ENCODE measurements at regions of chr16 and their contacts with region 1.

Region 1: DNA sequence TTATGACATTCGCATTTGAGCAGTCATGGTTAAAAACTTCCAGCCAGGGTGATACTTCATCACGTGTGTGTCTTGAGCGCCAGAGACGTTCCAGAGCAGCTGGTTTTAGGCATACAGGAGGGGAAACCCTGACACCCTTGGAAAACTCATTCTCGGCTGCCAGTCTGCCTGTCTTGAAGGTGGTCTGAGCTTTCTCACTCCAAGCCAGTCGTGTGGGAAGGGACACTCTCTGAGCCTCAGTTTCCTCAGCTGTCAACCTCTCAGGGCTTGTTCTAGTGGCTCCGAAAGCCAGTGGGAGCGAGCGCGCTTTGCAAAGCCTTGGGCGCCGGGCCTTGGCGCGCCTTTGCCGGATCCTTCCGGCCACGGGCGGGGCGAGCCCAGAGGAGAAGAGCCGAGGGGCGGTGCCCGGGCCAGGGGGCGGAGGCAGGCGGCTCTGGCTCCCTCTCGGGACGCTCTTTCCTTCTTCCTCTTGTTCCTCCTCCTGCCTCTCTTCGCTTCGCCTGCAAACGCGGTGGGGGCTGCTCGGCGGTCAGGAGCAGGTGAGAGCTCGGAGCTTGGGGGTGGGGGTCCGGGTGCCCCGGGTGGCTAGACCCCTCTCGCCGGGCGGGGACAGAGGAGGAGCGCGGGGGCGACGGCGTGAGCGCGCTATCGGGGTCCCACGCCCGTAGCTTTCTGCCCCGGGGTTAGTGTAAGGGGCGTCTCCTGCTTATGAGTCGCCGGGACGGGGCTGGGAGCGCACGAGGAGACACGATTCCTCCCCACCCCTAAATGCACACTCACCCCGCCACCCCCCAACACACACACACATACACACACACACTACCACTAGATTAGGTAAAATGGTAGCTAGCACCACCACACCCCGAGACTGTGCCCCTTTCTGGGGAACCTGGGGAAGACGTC is at the start of gene LDAF1:
- DNase-seq: peak; percentile 82 to 88
- ATAC-seq: peak; percentile 89 to 95 (median 92)
- H3K4me3 ChIP-seq: peak within 1 kb of the TSS; percentile 62 to 89 (median 85)
- H3K27ac ChIP-seq: peak within 1 kb of the TSS; percentile 65 to 95 (median 86)
- H3K4me1 ChIP-seq: peaks cover 10 to 59% (median 49%) of the 10 kb centered on the region in 9 donors
- H3K27me3 ChIP-seq: no peaks in the 10 kb centered on the region
- CTCF ChIP-seq: peak in 4 of 9 donors; percentile 7 to 26 (median 16)
- total RNA-seq, gene LDAF1: 116 to 182 (median 143) TPM

Region 2: DNA sequence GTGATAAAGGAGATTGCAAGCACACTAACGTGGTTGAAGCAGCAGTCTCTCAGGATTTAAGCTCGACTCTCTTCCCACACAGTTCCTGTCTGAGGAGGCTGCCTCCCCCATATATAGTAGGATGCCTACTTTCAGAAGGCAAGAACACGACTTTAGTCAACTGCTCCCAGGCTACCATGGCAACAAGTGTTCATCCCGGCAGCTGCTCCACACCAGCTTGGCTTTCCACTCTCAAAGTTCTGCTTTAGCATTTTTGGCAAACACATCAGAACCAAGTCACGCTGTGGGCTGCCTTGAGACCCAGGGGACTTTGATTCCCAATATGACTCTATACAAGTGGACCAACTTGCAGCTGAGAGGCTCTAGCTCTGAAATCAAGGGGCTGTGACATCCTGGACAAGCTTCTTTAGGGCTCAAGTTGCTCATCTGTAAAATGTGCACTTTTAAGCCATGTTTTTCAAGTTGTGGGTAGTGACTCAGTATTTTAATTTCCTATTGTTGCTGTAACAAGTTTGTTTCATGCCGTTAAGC is 36.4 kb after region 1 on chr16:
- intact Hi-C with region 1: no loop called
- DNase-seq: no peak
- ATAC-seq: no peak
- H3K4me3 ChIP-seq: no peak overlapping the region
- H3K27ac ChIP-seq: no peak overlapping the region
- H3K4me1 ChIP-seq: no peaks in the 10 kb centered on the region
- H3K27me3 ChIP-seq: peaks cover 0 to 23% (median 7%) of the 10 kb centered on the region in 7 donors
- CTCF ChIP-seq: no peak

Region 3: GRCh38 chr16:21277927-21278706 is 119.7 kb after region 1 on chr16 and contains the start of gene CRYM:
- intact Hi-C with region 1: loop called in 2 of 10 experiments (anchors 1 to 5 kb)
- DNase-seq: peak; percentile 55 to 75
- ATAC-seq: peak; percentile 91 to 97 (median 96)
- H3K4me3 ChIP-seq: peak within 1 kb of the TSS; percentile 4 to 82 (median 61)
- H3K27ac ChIP-seq: peak within 1 kb of the TSS; percentile 31 to 94 (median 82)
- H3K4me1 ChIP-seq: peaks cover 0 to 30% (median 12%) of the 10 kb centered on the region in 9 donors
- H3K27me3 ChIP-seq: peaks cover 0 to 85% (median 22%) of the 10 kb centered on the region in 7 donors
- CTCF ChIP-seq: peak; percentile 60 to 89 (median 84)
- total RNA-seq, gene CRYM: 31.9 to 265 (median 186) TPM

Region 4: GRCh38 chr16:21554795-21555585 is 396.5 kb after region 1 on chr16:
- intact Hi-C with region 1: loop called in 4 of 10 experiments (anchors 5 to 10 kb)
- DNase-seq: peak; percentile 87 to 91
- ATAC-seq: peak; percentile 49 to 82 (median 71)
- H3K4me3 ChIP-seq: peak overlapping the region in 4 of 10 donors; percentile 2 to 34 (median 13)
- H3K27ac ChIP-seq: peak overlapping the region in 1 of 10 donors; percentile 48
- H3K4me1 ChIP-seq: peaks cover 4 to 31% (median 16%) of the 10 kb centered on the region in 9 donors
- H3K27me3 ChIP-seq: peaks cover 0 to 17% (median 9%) of the 10 kb centered on the region in 7 donors
- CTCF ChIP-seq: peak in 8 of 9 donors; percentile 98 to 100 (median 100)

Region 5: GRCh38 chr16:21952793-21953540 is 794.5 kb after region 1 on chr16 and contains the start of gene UQCRC2:
- intact Hi-C with region 1: loop called in 1 of 10 experiments (anchors 5 kb)
- DNase-seq: peak; percentile 85 to 93
- ATAC-seq: peak; percentile 95 to 98 (median 97)
- H3K4me3 ChIP-seq: peak within 1 kb of the TSS; percentile 78 to 98 (median 88)
- H3K27ac ChIP-seq: peak within 1 kb of the TSS; percentile 86 to 99 (median 96)
- H3K4me1 ChIP-seq: peaks cover 3 to 70% (median 50%) of the 10 kb centered on the region in 9 donors
- H3K27me3 ChIP-seq: no peaks in the 10 kb centered on the region
- CTCF ChIP-seq: no peak
- total RNA-seq, gene UQCRC2: 648 to 1,183 (median 997) TPM

Region 6: DNA sequence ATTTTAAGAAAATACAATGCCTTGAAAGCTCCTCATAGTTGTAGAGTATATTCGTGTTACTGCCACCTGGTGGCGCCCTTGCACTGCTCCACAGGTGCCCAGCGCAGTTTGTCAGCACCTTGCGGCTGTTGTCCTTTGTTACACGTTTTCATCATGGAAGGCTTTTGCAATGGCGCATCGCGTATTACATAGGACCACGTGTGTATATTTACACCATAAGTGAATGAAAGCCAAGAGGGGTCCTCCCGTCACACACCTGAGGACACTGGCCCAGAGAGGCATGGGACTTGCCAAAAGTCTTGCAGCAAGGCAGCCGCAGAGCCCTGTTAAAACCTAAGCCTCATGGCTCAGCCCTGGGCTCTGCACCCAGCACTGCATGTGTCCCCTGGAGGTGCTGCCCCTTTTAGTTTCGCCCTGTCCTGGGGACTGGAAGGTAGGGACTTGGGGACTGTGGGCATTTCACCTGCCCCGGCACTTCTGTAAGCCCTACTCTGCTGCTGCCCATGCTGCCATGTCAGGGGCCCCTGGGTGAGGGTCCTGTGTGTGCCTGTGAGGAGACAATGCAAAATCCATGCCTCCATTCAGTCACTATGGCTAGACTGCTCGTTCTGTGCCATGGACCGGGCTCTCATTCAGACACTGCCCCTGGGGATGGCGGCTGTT is 1163.0 kb after region 1 on chr16:
- intact Hi-C with region 1: loop called in 2 of 10 experiments (anchors 10 kb)
- DNase-seq: peak; percentile 50 to 59
- ATAC-seq: peak; percentile 39 to 73 (median 66)
- H3K4me3 ChIP-seq: no peak overlapping the region
- H3K27ac ChIP-seq: no peak overlapping the region
- H3K4me1 ChIP-seq: peaks cover 0 to 15% (median 4%) of the 10 kb centered on the region in 9 donors
- H3K27me3 ChIP-seq: no peaks in the 10 kb centered on the region
- CTCF ChIP-seq: peak; percentile 81 to 94 (median 91)

Region 7: GRCh38 chr16:22677024-22677830 is 1518.8 kb after region 1 on chr16:
- intact Hi-C with region 1: loop called in 3 of 10 experiments (anchors 5 to 10 kb)
- DNase-seq: no peak
- ATAC-seq: peak in 1 of 8 donors; percentile 51
- H3K4me3 ChIP-seq: no peak overlapping the region
- H3K27ac ChIP-seq: no peak overlapping the region
- H3K4me1 ChIP-seq: peaks cover 0 to 23% (median 6%) of the 10 kb centered on the region in 9 donors
- H3K27me3 ChIP-seq: peaks cover 0 to 28% (median 16%) of the 10 kb centered on the region in 7 donors
- CTCF ChIP-seq: no peak